Heart left ventricle (tissue), 16 donors: ENCODE measurements at regions of chr18 and their contacts with region 1.

Region 1: GRCh38 chr18:28189400-28190239 is 12.7 kb upstream of the CDH2 start:
- DNase-seq: no peak
- ATAC-seq: no peak
- H3K4me3 ChIP-seq: no peak overlapping the region
- H3K27ac ChIP-seq: no peak overlapping the region
- H3K4me1 ChIP-seq: no peaks in the 10 kb centered on the region
- H3K27me3 ChIP-seq: no peaks in the 10 kb centered on the region
- CTCF ChIP-seq: peak in 11 of 12 donors; percentile 5 to 57 (median 37)
- POLR2A ChIP-seq: no peak

Region 2: GRCh38 chr18:27605107-27605834 is 584.3 kb before region 1 on chr18:
- intact Hi-C with region 1: loop called in 1 of 10 experiments (anchors 10 kb)
- DNase-seq: peak in 4 of 5 donors; percentile 33 to 56 (median 46)
- ATAC-seq: peak in 3 of 4 donors; percentile 86 to 94 (median 86)
- H3K4me3 ChIP-seq: no peak overlapping the region
- H3K27ac ChIP-seq: no peak overlapping the region
- H3K4me1 ChIP-seq: no peaks in the 10 kb centered on the region
- H3K27me3 ChIP-seq: no peaks in the 10 kb centered on the region
- CTCF ChIP-seq: peak; percentile 67 to 87 (median 72)
- POLR2A ChIP-seq: no peak

Region 3: GRCh38 chr18:27769152-27769551 is 420.5 kb before region 1 on chr18:
- intact Hi-C with region 1: loop called in 3 of 10 experiments (anchors 10 kb)
- DNase-seq: no peak
- ATAC-seq: no peak
- H3K4me3 ChIP-seq: no peak overlapping the region
- H3K27ac ChIP-seq: no peak overlapping the region
- H3K4me1 ChIP-seq: no peaks in the 10 kb centered on the region
- H3K27me3 ChIP-seq: no peaks in the 10 kb centered on the region
- CTCF ChIP-seq: no peak
- POLR2A ChIP-seq: no peak

Region 4: DNA sequence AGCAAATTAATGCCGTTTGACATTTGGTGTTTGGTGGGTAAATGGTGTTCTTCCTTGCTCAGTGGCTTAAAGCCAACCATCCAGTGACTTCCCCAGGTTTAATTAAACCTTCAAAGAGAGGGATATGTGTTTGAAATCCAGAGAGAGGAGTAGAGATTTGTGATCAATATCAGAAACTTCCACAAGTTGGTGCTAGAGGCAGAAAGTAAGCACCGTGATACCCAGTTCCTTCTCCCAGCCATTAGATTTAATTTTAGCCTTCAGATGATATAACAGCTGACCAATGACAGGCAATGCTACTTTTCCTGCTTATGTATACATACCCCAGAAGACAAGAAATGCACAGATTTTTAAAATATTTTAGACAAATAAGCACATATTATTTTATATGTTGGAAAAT is 411.2 kb before region 1 on chr18:
- intact Hi-C with region 1: loop called in 3 of 10 experiments (anchors 10 kb)
- DNase-seq: no peak
- ATAC-seq: peak in 3 of 4 donors; percentile 72 to 75 (median 72)
- H3K4me3 ChIP-seq: no peak overlapping the region
- H3K27ac ChIP-seq: no peak overlapping the region
- H3K4me1 ChIP-seq: no peaks in the 10 kb centered on the region
- H3K27me3 ChIP-seq: no peaks in the 10 kb centered on the region
- CTCF ChIP-seq: peak; percentile 16 to 60 (median 46)
- POLR2A ChIP-seq: no peak

Region 5: DNA sequence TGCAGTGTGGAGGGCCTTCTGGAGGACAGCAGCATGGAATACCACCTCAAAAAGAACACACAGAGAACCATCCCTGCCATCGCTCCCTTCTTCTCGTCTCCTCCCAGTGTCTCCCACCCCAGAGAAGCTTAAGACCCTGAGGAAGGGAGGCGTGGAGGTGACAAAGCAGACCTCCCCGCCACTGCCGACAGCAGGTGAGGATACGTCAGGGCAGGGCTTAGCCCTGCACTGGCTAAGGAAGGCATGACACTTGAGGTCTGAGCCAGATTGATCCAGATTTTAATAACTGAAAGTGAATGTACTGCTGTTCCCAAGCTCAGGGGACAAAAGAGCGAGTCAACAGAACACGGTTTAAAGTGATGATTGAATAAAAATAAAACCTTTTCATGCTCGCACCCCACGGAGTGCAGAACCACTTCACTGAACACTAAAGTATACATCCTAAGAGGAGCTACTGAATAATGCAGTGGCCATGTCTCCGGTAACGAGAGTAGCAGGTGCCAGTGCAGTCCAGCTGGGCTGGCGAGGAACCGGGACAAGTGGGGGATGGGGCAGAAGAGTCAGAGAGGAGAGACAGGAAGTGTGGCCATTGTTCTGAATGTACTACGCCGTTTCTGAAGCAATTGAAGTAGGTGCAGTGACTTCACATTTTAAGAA is 403.7 kb before region 1 on chr18:
- intact Hi-C with region 1: loop called in 1 of 10 experiments (anchors 10 kb)
- DNase-seq: no peak
- ATAC-seq: no peak
- H3K4me3 ChIP-seq: no peak overlapping the region
- H3K27ac ChIP-seq: no peak overlapping the region
- H3K4me1 ChIP-seq: no peaks in the 10 kb centered on the region
- H3K27me3 ChIP-seq: no peaks in the 10 kb centered on the region
- CTCF ChIP-seq: no peak
- POLR2A ChIP-seq: no peak

Region 6: GRCh38 chr18:28127763-28128663 is 61.6 kb before region 1 on chr18:
- intact Hi-C with region 1: no loop called
- DNase-seq: no peak
- ATAC-seq: peak in 3 of 4 donors; percentile 10 to 44 (median 16)
- H3K4me3 ChIP-seq: no peak overlapping the region
- H3K27ac ChIP-seq: peak overlapping the region; percentile 50 to 97 (median 76)
- H3K4me1 ChIP-seq: peaks cover 0 to 76% (median 13%) of the 10 kb centered on the region in 12 donors
- H3K27me3 ChIP-seq: no peaks in the 10 kb centered on the region
- CTCF ChIP-seq: no peak
- POLR2A ChIP-seq: no peak

Region 7: DNA sequence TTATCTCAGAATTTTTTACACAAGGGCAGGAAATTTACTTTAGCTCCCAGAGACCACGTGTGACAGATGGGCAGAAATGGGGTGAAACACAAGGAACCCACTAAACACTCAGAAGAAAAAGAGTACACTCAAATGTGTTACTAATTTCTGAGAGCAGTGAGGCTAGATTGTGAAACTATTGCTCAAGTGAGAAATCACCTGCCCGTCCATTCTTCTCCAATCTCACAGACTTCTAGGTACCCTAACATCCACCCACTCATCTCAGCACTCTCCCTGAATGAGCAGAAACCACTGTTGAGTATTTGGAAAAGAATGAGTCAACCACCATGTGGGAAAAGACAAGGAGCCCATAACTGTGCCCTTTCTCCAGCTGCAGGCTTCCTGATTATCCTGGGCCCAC is 280.3 kb after region 1 on chr18:
- intact Hi-C with region 1: no loop called
- DNase-seq: no peak
- ATAC-seq: no peak
- H3K4me3 ChIP-seq: no peak overlapping the region
- H3K27ac ChIP-seq: no peak overlapping the region
- H3K4me1 ChIP-seq: peaks cover 0 to 7% (median 0%) of the 10 kb centered on the region in 12 donors
- H3K27me3 ChIP-seq: no peaks in the 10 kb centered on the region
- CTCF ChIP-seq: no peak
- POLR2A ChIP-seq: no peak